ENCODE measurements at regions of chr3 and their contacts with region 1.

Region 1: DNA sequence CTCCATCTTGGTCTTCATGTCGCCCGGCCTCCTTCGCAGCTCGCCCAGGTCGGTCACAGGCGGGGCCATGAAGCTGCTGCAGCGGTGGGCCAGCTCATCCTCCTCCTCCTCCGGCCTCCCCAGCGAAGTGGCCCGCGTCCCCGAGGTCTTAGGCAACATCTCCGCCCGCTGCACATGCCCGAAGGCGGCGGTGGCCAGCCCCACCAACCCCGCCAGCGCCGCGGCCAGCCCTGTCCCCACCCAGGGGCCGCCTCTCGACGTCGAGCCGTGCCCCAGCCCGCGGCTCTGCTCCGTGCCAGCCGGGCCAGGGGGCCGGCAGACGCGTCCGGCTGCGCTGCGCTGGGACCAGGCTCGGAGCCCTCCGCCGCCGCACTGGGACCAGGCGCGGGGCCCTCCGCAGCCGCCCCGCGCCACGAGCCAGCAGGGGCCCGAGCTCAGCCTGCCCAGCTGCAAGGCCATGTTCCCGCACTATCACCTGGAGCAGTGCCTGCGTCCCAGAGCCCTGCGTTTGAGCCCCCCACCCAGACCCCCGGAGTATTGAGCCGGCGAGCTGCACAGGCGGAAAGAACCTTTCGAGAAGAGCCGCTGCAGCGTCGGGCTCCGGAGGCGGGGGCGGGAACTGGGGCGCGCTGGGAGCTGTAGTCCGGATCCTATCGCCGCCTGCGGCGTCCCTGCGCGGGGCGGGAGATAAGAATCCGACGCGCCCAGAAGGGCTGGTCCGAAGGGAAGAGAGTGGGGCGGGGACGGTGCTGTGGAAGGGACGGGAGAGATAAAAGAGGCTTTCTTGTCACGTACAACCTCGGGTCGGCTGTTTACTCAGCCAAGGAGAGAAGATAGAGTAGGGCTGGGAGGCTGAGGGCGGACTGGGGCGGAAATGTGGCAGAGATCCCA is at the start of gene CPOX:
- DNase-seq: peak; percentile 90
- H3K4me3 Mint-ChIP-seq: peak within 1 kb of the TSS; percentile 88
- H3K27ac Mint-ChIP-seq: peak within 1 kb of the TSS; percentile 82
- H3K4me1 Mint-ChIP-seq: peaks cover 27% of the 10 kb centered on the region
- H3K27me3 Mint-ChIP-seq: no peaks in the 10 kb centered on the region
- total RNA-seq, gene CPOX: 22.0 to 22.3 TPM

Region 2: DNA sequence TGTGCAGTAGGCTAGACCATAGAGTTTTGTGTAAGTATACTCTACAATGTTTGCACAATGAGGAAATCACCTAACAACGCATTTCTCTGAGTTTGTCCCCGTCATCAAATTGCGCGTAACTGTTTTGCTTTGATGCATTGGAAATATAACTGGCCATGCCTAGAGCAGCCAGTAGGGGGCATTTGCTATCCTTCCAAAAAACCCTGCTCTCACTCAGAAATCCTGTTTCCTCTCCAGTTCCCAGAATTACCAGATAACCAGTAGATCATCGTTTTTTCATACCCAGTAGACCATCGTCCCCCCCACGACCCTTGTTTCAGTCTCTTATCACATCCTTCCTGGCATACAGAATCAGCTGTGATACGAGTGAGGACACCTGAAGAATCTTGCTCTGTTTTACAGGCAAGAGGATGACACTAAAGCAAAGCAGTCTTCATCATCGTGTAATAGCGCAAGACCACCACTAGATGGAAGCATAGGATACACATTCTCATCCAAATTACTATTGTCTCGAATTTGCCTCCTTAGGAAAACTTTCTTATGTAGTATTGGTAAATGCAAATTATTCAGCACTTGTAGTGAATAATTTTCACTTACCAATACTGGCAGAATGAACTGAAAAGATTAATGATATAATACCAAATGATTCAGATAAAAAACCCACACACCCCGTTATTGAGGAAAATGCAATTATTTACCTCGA is 553.8 kb before region 1 on chr3:
- CTCF ChIA-PET with region 1: interaction called, 3 read pairs
- intact Hi-C with region 1: loop called (anchors 1 kb)
- DNase-seq: peak; percentile 86
- H3K4me3 Mint-ChIP-seq: peak overlapping the region; percentile 88
- H3K27ac Mint-ChIP-seq: peak overlapping the region; percentile 98
- H3K4me1 Mint-ChIP-seq: peaks cover 6% of the 10 kb centered on the region
- H3K27me3 Mint-ChIP-seq: no peaks in the 10 kb centered on the region

Region 3: DNA sequence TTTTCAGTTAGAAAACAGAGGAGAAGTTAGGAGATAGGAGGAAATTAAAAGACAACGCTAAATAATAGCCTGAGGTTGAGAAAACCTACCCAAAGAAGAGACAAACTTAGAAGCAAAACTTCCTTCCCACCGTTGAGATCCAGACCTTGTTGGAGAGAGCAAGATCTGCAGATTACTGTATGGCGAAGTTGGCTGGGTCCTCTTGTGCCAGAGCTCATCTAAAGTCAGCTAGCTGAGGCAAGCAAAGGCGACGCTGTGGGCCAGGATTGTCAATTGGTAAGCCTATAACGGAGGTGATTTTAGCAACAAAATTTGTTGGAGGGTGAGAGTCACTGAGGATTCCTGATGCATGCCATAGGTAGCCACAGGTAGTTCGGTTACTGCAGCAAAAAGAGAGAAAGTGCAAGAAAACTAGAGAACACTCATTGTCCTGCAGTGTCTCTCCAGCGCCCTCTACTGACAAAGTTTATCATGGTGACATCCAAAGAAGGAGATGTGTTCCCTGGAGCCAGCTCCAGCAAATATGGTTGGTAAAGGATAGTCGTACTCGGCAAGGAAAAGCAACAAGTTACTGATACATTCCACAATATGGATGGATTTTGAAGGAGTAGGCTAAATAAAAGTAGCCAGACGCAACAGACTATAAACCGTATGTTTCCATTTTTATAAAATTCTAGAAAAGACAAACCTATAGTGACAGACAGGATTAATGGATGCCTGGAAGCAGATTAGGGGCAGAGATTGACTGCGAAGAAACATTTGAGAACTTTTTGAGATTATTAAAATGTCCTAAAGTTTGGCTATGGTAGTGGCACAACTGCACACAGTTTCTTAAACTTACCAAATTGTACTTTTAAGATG is 249.4 kb before region 1 on chr3:
- CTCF ChIA-PET with region 1: no interaction called
- intact Hi-C with region 1: no loop called
- DNase-seq: peak; percentile 59
- H3K4me3 Mint-ChIP-seq: no peak overlapping the region
- H3K27ac Mint-ChIP-seq: no peak overlapping the region
- H3K4me1 Mint-ChIP-seq: no peaks in the 10 kb centered on the region
- H3K27me3 Mint-ChIP-seq: peaks cover 11% of the 10 kb centered on the region

Region 4: DNA sequence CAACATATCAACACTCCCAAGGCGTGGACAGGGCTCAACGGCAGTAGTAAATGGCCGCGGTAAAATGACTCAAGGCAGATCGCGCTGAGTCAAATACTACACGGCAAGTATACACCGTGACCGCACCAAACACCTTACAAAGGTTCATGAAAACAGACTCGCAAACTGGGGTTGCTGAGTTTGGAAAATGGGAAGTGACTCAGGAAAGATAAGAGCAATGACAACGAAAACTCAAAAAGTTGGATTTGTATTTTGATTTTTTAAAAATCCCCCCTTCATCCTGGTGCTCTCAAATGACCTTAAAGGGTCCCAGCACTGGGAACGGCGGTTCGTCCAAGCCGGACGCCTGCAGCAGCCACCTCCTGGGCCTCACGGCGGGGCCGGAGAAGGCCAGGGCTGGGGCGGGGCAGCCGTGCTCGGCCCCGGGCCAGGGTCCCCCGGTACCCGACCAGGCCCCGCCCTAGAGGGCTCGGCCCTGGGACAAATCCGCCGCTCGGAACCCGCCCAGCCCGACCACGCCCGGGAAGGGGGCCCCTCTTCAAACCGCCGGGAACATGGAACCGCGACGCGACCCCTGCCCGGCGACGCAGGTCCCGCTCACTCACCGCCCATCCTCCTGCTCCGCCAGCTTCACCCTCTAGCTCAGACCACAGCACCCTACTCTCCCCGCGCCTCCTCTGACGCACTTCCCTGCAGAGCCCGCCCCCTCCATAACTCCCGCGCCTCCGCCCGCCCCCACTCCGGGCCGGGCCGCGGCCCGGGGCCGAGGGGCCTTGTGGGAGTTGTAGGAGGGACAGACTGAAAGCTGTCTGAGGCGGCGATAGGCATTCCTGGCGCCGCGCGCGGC is 70.8 kb before region 1 on chr3 and contains the start of gene CLDND1:
- CTCF ChIA-PET with region 1: interaction called, 3 read pairs
- intact Hi-C with region 1: loop called (anchors 1 kb)
- DNase-seq: peak; percentile 96
- H3K4me3 Mint-ChIP-seq: peak within 1 kb of the TSS; percentile 89
- H3K27ac Mint-ChIP-seq: peak within 1 kb of the TSS; percentile 93
- H3K4me1 Mint-ChIP-seq: peaks cover 43% of the 10 kb centered on the region
- H3K27me3 Mint-ChIP-seq: no peaks in the 10 kb centered on the region
- total RNA-seq, gene CLDND1: 91.7 to 94.6 TPM

Region 5: GRCh38 chr3:98556164-98557130 is 36.8 kb before region 1 on chr3:
- CTCF ChIA-PET with region 1: interaction called, 4 read pairs
- intact Hi-C with region 1: loop called (anchors 1 kb)
- DNase-seq: peak; percentile 87
- H3K4me3 Mint-ChIP-seq: peak overlapping the region; percentile 30
- H3K27ac Mint-ChIP-seq: peak overlapping the region; percentile 83
- H3K4me1 Mint-ChIP-seq: peaks cover 76% of the 10 kb centered on the region
- H3K27me3 Mint-ChIP-seq: peaks cover 5% of the 10 kb centered on the region

Region 6: DNA sequence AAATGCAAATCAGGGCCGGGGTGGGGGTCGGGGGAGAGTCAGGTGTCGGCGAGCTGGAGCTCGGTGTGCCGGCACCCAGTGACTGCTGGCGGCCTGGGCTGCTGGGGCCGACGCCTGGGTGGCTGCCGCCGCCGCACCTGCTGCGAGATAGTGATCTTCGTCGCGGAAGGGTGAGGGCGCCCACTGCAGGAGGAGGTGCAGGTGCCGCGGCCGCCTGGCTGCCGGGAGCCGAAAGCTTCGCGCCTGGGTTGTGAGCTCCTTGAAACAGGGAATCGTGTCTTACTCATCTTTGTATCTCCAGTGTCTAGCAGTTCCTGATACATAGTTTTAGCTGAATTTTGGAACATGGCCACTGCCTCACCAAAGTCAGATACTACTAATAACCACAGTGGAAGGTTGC is 64.2 kb after region 1 on chr3:
- CTCF ChIA-PET with region 1: interaction called, 14 read pairs
- intact Hi-C with region 1: no loop called
- DNase-seq: peak; percentile 58
- H3K4me3 Mint-ChIP-seq: no peak overlapping the region
- H3K27ac Mint-ChIP-seq: no peak overlapping the region
- H3K4me1 Mint-ChIP-seq: peaks cover 3% of the 10 kb centered on the region
- H3K27me3 Mint-ChIP-seq: peaks cover 19% of the 10 kb centered on the region

Region 7: GRCh38 chr3:98817547-98818041 is 224.3 kb after region 1 on chr3:
- CTCF ChIA-PET with region 1: interaction called, 25 read pairs
- intact Hi-C with region 1: no loop called
- DNase-seq: no peak
- H3K4me3 Mint-ChIP-seq: no peak overlapping the region
- H3K27ac Mint-ChIP-seq: no peak overlapping the region
- H3K4me1 Mint-ChIP-seq: no peaks in the 10 kb centered on the region
- H3K27me3 Mint-ChIP-seq: no peaks in the 10 kb centered on the region

Region 8: DNA sequence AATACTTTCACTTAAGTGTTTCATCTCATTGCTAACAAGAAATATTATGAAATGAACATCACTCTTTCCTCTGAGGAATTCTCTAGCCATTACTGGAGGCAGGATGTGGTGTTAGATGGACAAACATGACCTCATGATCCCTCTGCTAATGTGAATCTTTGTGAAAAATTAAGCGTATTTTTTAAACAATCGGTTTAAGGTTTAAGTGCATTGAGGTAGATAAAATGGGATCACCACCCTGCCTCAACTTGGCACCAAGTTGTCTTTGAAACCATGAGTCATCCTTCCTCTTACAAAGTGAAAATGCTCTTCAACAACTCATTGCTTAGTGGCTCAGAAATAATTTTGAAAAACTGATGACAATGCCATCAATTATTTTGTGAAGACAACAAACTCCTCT is 384.2 kb after region 1 on chr3:
- CTCF ChIA-PET with region 1: no interaction called
- intact Hi-C with region 1: loop called (anchors 10 kb)
- DNase-seq: no peak
- H3K4me3 Mint-ChIP-seq: no peak overlapping the region
- H3K27ac Mint-ChIP-seq: no peak overlapping the region
- H3K4me1 Mint-ChIP-seq: peaks cover 9% of the 10 kb centered on the region
- H3K27me3 Mint-ChIP-seq: peaks cover 25% of the 10 kb centered on the region